AG04449 (cell line): ENCODE measurements at regions of chr12 and their contacts with region 1.

Region 1: GRCh38 chr12:19643635-19644034 is 204.3 kb downstream of the AEBP2 start:
- DNase-seq: no peak
- H3K4me3 ChIP-seq: no peak overlapping the region
- CTCF ChIP-seq: peak; percentile 53

Region 2: DNA sequence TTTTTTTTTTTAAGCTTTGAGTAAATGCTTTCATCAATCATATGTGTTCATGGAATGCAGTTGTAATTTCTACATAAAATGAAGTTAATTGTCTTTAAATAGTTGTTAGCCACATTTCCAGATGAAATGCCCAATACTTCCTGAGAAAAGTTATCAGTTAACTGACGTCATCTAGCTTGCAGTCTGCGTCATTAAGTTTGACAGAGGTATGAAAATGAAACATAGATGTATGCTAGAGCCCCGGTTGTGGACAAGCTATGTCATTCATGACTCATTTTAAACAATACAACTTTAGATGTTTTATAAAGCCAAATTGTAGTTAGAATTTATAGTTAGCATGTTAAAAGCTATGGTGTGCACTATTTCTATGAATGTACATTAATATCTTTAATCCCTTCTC is 423.4 kb before region 1 on chr12:
- CTCF ChIA-PET with region 1: no interaction called
- POLR2A ChIA-PET with region 1: no interaction called
- DNase-seq: no peak
- H3K4me3 ChIP-seq: no peak overlapping the region
- CTCF ChIP-seq: no peak

Region 3: GRCh38 chr12:19572920-19573558 is 70.6 kb before region 1 on chr12:
- CTCF ChIA-PET with region 1: interaction called, 16 read pairs
- POLR2A ChIA-PET with region 1: no interaction called
- DNase-seq: peak; percentile 12
- H3K4me3 ChIP-seq: no peak overlapping the region
- CTCF ChIP-seq: peak; percentile 48

Region 4: GRCh38 chr12:19654650-19655376 is 11.2 kb after region 1 on chr12:
- CTCF ChIA-PET with region 1: interaction called, 22 read pairs
- POLR2A ChIA-PET with region 1: no interaction called
- DNase-seq: peak; percentile 65
- H3K4me3 ChIP-seq: no peak overlapping the region
- CTCF ChIP-seq: no peak